Endothelial cell of umbilical vein (primary cell): ENCODE measurements at regions of chr7 and their contacts with region 1.

Region 1: DNA sequence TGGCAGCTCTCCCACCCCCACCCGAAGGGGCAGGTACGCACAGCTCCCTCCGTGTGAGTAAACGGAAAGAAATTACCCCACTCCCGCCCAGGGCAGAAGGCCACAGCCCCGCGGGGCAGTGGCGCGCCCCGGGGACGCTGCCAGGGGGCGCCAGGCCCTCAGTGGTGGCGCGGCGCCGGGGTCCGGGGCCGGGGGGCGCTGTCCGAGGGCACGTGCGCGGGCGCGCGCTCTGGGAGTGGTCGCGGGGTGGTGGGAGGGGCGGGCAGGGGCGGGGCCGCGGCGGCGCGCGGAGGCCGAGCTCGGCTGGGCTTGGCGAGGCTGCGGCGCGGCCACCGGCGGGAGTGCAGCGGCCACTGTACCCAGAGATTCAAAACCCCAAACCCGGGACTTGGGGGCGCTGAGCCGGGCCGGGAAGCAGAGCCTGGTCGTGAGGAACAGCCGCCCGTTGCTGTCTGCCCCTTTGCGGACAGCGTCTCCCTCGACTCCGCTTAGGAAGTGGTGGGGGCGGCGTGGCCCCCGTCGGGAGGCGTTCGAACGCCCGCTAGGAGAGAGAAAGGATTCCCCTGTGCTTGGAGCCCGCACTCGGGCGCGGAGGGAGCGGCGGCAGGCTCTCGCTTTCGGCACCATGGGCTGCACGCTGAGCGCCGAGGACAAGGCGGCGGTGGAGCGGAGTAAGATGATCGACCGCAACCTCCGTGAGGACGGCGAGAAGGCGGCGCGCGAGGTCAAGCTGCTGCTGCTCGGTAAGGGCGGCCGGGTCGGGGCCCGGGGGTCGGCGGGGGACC is at the start of gene GNAI1:
- DNase-seq: peak; percentile 65
- H3K4me3 ChIP-seq: peak within 1 kb of the TSS; percentile 88 to 94 (median 91)
- H3K27ac ChIP-seq: peak within 1 kb of the TSS; percentile 54
- H3K4me1 ChIP-seq: peaks cover 17% of the 10 kb centered on the region
- H3K27me3 ChIP-seq: peaks cover 0 to 1% of the 10 kb centered on the region in 2 experiments
- CTCF ChIP-seq: peak; percentile 30 to 49
- POLR2A ChIP-seq: peak; percentile 70
- total RNA-seq, gene GNAI1: 15.0 and 19.7 TPM in 2 replicates

Region 2: GRCh38 chr7:80095545-80095944 is 39.2 kb before region 1 on chr7:
- CTCF ChIA-PET with region 1: interaction called, 14 read pairs
- POLR2A ChIA-PET with region 1: no interaction called
- dilution Hi-C with region 1: no loop called
- intact Hi-C with region 1: loop called (anchors 1 kb)
- DNase-seq: peak; percentile 37
- H3K4me3 ChIP-seq: no peak overlapping the region
- H3K27ac ChIP-seq: no peak overlapping the region
- H3K4me1 ChIP-seq: no peaks in the 10 kb centered on the region
- H3K27me3 ChIP-seq: no peaks in the 10 kb centered on the region
- CTCF ChIP-seq: peak; percentile 8 to 29
- POLR2A ChIP-seq: no peak

Region 3: DNA sequence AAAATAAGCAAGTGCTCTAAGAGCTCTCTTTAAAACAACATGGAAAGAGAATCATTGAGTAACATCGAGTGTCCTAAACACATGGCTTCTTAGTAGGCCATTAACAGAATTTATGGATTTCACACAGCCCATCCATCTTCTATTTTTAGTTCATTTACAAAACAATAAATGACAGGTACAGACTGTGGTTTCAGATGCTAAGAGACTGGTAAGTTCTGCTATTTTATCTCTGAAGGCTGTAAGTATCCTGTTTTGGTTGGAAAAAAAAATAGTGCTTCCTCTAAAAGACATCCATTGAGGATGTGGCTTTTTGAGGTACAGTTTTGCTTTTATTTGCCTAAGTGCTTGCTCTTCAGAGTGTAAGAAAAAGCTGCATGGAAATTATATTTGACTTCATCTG is 27.4 kb before region 1 on chr7:
- CTCF ChIA-PET with region 1: interaction called, 22 read pairs
- POLR2A ChIA-PET with region 1: no interaction called
- dilution Hi-C with region 1: no loop called
- intact Hi-C with region 1: loop called (anchors 1 kb)
- DNase-seq: peak; percentile 59
- H3K4me3 ChIP-seq: peak overlapping the region in 1 of 3 experiments; percentile 40
- H3K27ac ChIP-seq: peak overlapping the region; percentile 58
- H3K4me1 ChIP-seq: peaks cover 28% of the 10 kb centered on the region
- H3K27me3 ChIP-seq: no peaks in the 10 kb centered on the region
- CTCF ChIP-seq: no peak
- POLR2A ChIP-seq: no peak

Region 4: GRCh38 chr7:80379034-80379982 is 244.6 kb after region 1 on chr7:
- CTCF ChIA-PET with region 1: interaction called, 11 read pairs
- POLR2A ChIA-PET with region 1: no interaction called
- dilution Hi-C with region 1: no loop called
- intact Hi-C with region 1: no loop called
- DNase-seq: peak; percentile 78
- H3K4me3 ChIP-seq: no peak overlapping the region
- H3K27ac ChIP-seq: peak overlapping the region; percentile 7
- H3K4me1 ChIP-seq: peaks cover 12% of the 10 kb centered on the region
- H3K27me3 ChIP-seq: no peaks in the 10 kb centered on the region
- CTCF ChIP-seq: no peak
- POLR2A ChIP-seq: no peak

Region 5: GRCh38 chr7:80410081-80410480 is 275.4 kb after region 1 on chr7:
- CTCF ChIA-PET with region 1: no interaction called
- POLR2A ChIA-PET with region 1: no interaction called
- dilution Hi-C with region 1: no loop called
- intact Hi-C with region 1: no loop called
- DNase-seq: no peak
- H3K4me3 ChIP-seq: no peak overlapping the region
- H3K27ac ChIP-seq: no peak overlapping the region
- H3K4me1 ChIP-seq: no peaks in the 10 kb centered on the region
- H3K27me3 ChIP-seq: no peaks in the 10 kb centered on the region
- CTCF ChIP-seq: no peak
- POLR2A ChIP-seq: no peak

Region 6: GRCh38 chr7:80453699-80454340 is 319.1 kb after region 1 on chr7:
- CTCF ChIA-PET with region 1: interaction called, 4 read pairs
- POLR2A ChIA-PET with region 1: no interaction called
- dilution Hi-C with region 1: no loop called
- intact Hi-C with region 1: loop called (anchors 1 kb)
- DNase-seq: peak; percentile 59
- H3K4me3 ChIP-seq: no peak overlapping the region
- H3K27ac ChIP-seq: no peak overlapping the region
- H3K4me1 ChIP-seq: no peaks in the 10 kb centered on the region
- H3K27me3 ChIP-seq: no peaks in the 10 kb centered on the region
- CTCF ChIP-seq: peak in 1 of 2 donors; percentile 29
- POLR2A ChIP-seq: no peak